Activated naive CD4-positive, alpha-beta T cell treated with anti-CD3 and anti-CD28 coated beads for 36 hours (primary cell): ENCODE measurements at regions of chr14 and their contacts with region 1.

Region 1: GRCh38 chr14:74881431-74882361 is at the start of gene DLST:
- DNase-seq: peak; percentile 87
- H3K4me3 Mint-ChIP-seq: peak within 1 kb of the TSS; percentile 91
- H3K27ac Mint-ChIP-seq: peak within 1 kb of the TSS; percentile 94
- H3K4me1 Mint-ChIP-seq: peaks cover 63% of the 10 kb centered on the region
- H3K27me3 Mint-ChIP-seq: no peaks in the 10 kb centered on the region
- total RNA-seq, gene DLST: 126 to 132 TPM

Region 2: DNA sequence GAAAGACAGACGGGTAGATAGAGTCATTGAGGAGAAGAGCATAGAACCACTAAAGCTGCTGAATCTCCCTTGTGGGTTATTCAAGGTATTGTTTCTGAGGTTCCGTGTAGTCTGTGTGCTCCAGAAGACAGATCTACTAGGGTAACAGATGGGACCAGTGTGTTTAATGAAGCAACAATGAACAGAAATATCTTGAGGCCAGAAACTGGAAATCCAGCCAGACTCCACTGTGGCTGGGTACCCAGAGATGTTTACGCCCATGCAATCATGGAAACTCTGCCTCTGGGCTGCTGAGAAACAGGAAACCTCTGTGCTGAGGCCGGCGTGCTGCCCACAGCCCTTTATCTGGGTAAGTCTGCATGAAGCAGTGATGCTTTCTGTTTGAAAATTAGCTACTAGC is 14.0 kb before region 1 on chr14:
- CTCF ChIA-PET with region 1: interaction called, 73 read pairs
- intact Hi-C with region 1: no loop called
- DNase-seq: peak; percentile 64
- H3K4me3 Mint-ChIP-seq: peak overlapping the region; percentile 7
- H3K27ac Mint-ChIP-seq: no peak overlapping the region
- H3K4me1 Mint-ChIP-seq: peaks cover 16% of the 10 kb centered on the region
- H3K27me3 Mint-ChIP-seq: no peaks in the 10 kb centered on the region

Region 3: GRCh38 chr14:74893614-74894091 is 12.0 kb after region 1 on chr14:
- CTCF ChIA-PET with region 1: interaction called, 10 read pairs
- intact Hi-C with region 1: no loop called
- DNase-seq: no peak
- H3K4me3 Mint-ChIP-seq: no peak overlapping the region
- H3K27ac Mint-ChIP-seq: peak overlapping the region; percentile 16
- H3K4me1 Mint-ChIP-seq: no peaks in the 10 kb centered on the region
- H3K27me3 Mint-ChIP-seq: no peaks in the 10 kb centered on the region

Region 4: GRCh38 chr14:75126679-75127473 is 245.2 kb after region 1 on chr14 and contains the start of gene NEK9:
- CTCF ChIA-PET with region 1: interaction called, 3 read pairs
- intact Hi-C with region 1: loop called (anchors 2 kb)
- DNase-seq: peak; percentile 92
- H3K4me3 Mint-ChIP-seq: peak within 1 kb of the TSS; percentile 96
- H3K27ac Mint-ChIP-seq: peak within 1 kb of the TSS; percentile 97
- H3K4me1 Mint-ChIP-seq: peaks cover 40% of the 10 kb centered on the region
- H3K27me3 Mint-ChIP-seq: no peaks in the 10 kb centered on the region
- total RNA-seq, gene NEK9: 53.5 to 55.6 TPM